ENCODE measurements at regions of chr2 and their contacts with region 1.

Region 1: GRCh38 chr2:112726497-112727190 is 5.8 kb downstream of the NT5DC4 start:
- DNase-seq: peak; percentile 55
- H3K4me3 ChIP-seq: no peak overlapping the region
- CTCF ChIP-seq: peak; percentile 98

Region 2: DNA sequence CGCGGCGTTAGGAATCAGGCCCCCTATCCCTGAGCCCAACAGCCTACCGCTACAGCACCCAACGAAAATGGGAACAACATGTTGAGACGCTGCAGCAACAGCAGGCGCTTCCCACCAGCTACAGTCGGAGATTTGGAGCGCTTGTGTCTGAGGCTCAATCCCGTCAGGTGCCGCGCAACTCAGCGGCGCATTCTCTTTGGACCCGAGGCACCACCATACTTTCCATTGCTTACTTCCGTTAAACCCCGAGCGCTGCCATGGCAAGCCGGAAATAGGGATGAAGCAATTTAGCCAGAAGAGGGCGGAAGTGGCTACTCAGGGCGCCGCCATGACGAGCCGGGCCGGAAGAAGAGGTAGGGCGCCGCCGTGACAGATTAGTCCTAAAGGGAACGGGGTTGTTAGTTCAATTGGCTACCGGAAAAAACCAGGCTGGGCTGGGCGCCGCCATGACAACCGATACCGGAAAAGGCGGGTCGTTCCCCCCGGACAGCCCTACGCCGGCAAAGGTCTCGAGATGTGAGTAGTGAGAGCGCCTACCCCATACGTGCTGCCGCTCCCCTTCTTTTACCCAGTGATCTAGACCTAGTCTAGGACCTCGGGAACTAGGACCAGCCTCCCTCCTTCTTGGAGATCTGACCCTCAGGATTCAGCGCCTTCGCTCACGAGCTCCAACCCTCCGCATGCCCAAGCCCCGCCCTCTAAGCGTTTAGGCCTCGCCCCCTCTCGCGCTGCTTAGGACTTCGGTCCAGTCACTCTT is 142.3 kb before region 1 on chr2 and contains the start of gene CHCHD5:
- CTCF ChIA-PET with region 1: interaction called, 101 read pairs
- POLR2A ChIA-PET with region 1: interaction called, 3 read pairs
- DNase-seq: no peak
- H3K4me3 ChIP-seq: peak within 1 kb of the TSS; percentile 89
- CTCF ChIP-seq: peak; percentile 13

Region 3: DNA sequence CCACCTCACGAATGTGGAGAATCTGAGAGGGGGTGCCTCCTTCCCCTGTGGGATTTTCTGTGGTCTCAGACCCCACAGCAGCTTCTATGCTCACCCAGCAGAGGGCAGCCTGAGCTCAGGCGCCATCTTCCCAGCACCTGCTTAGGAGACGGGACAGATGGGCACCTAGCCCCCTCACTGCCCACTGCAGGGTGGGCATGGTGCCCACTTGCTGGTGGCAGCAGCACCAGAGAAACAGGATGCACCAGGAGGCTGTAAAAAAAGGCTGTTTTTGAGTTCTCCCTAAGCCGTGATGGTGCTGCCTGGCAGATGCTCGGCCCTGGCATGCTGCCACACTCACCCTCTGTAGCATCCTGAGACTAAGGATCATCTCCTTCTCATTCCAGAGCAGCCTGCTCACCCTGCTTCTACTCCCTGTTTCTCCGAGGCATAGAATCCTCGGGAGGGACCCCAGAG is 100.0 kb before region 1 on chr2:
- CTCF ChIA-PET with region 1: interaction called, 206 read pairs
- POLR2A ChIA-PET with region 1: interaction called, 14 read pairs
- DNase-seq: no peak
- H3K4me3 ChIP-seq: peak overlapping the region; percentile 9
- CTCF ChIP-seq: peak; percentile 91

Region 4: GRCh38 chr2:112658820-112659667 is 67.6 kb before region 1 on chr2:
- CTCF ChIA-PET with region 1: interaction called, 18 read pairs
- POLR2A ChIA-PET with region 1: no interaction called
- DNase-seq: no peak
- H3K4me3 ChIP-seq: no peak overlapping the region
- CTCF ChIP-seq: no peak

Region 5: DNA sequence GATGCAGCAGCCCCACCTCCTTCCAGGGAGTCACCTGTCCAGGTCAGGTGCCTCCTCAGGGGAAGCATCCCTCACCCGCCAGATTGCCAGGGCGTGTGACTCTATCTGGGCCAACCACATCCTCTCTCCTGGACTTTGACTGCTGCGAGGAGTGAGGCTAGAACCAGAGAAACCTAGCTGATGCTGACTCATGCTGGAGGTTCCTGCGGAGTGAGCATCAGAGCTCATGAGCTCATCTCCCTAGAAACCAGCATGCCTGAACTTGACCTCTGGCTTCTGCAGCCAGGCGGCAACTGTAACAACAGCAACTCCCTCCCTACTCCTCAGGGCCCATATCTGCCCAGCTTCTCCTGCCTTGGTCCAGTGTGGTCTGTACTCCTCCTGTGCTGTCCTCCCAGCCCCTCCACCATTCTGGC is 34.1 kb before region 1 on chr2:
- CTCF ChIA-PET with region 1: interaction called, 10 read pairs
- POLR2A ChIA-PET with region 1: no interaction called
- DNase-seq: peak; percentile 63
- H3K4me3 ChIP-seq: no peak overlapping the region
- CTCF ChIP-seq: no peak

Region 6: DNA sequence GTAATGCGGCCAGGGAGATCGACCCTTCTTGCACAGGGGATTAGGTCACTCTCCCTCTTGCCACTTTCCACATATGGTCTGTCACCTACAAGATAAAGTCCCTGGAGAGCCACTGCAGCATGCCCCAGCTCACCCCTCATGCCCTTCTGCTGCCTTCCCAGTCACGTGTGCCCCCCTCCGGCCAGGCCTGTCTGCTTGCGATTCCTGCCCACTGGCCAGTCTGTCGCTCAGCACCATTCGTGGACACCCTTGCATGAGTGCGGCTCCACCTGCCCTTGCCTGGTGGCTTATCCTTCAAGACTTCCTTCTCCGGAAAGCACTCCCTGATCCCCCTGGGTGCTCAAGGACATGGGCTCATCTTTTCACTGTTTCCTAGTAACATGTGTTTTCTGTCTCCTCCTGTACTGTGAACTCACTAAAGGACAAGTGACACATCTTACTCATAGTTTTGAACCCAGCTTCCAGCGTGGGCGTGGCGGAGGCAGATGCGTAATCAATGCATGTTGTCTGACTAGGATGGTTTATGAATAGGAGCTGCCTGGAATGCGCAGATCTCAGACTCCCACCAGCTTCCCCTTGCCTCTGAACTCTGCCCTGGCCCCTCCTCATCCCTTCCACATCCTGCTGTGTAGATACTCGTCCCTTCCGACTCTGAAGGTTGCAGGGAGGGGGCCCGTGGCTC is 13.6 kb before region 1 on chr2:
- CTCF ChIA-PET with region 1: interaction called, 36 read pairs
- POLR2A ChIA-PET with region 1: no interaction called
- DNase-seq: no peak
- H3K4me3 ChIP-seq: no peak overlapping the region; the same call in 1 of the 2 replicates
- CTCF ChIP-seq: no peak

Region 7: DNA sequence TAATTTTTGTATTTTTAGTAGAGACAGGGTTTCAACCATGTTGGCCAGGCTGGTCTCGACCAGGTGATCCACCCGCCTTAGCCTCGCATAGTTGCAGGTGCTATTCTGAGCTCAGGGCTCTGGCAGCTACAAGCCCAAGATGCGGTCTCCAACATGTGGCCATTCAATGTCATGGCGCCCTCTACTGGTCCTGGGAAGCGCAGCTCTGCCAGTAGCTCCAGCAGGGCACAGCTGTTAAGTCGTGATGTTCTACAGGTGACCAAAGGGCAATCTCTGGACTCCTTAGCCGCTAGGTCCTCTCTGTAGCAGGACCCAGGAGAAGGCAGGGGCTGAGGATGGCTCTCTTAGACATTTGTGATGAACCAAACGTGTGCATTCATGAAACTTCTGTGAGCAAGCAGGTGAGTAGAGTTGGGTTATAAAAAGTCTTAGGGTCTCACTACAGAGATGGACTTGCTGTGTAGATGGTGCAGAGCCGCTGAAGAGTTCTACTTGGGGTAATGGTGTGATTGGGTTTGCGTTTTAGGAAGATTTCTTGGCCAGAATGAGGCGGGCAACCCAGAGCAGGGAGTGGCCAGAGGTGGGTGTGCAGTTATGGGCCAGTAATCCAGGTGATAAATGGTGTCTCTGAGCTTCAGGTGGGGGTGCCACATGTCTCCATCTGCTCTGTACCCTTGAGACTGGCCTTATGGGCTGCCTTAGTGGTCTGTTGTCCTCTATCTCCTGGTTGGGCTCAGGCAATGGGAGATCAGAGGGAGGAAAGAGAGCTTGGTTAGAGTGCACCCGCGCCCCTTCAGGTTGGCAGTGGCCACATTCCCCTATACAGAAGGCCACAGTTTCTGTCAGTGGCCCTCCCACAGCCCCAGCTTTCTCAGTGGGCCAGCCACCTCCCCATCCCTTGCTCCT is 215.4 kb after region 1 on chr2:
- CTCF ChIA-PET with region 1: interaction called, 52 read pairs
- POLR2A ChIA-PET with region 1: no interaction called
- DNase-seq: peak; percentile 14
- H3K4me3 ChIP-seq: no peak overlapping the region
- CTCF ChIP-seq: peak; percentile 95

Region 8: DNA sequence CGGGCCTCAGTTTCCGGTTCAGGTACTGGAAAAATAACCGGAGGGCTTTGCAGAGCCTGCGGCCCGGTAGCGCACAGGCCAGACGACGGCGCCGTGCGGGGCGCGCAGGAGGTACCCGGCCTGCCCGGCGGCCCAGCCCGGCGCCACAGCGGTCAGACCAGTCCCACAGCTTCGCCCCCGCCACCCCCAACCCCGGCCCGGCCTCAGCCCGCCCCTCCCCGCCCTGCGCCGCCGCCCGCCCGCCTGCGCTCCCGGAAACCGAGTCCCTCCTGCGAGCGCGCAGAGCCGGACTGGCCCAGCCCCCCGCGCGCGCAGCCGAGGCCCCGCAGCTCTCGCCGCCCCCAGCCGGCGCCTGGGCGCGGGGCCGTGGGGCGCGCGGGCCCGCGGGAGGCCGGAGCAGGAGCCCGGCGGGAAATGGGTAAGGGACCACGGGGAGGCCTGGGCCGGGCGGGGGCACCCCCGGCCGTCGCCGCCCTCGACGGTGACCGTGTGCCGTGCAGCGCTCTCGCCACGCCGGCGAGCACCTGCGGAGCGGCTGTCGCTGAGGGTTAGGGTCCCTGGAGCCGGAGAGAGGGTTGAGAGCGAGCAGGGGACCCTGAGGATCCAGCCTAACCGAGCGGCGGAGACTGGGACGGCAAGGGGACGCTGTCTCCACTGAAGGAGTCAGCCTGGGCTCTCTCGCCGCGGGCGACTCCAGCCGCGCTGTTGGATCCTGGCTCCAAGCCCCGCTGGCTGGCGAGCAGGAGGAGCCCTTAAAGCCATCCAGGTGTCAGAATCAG is 430.7 kb after region 1 on chr2:
- CTCF ChIA-PET with region 1: no interaction called
- POLR2A ChIA-PET with region 1: no interaction called
- DNase-seq: no peak
- H3K4me3 ChIP-seq: peak overlapping the region; percentile 50
- CTCF ChIP-seq: no peak

Measured in AG04449 (cell line).